AG04450 (cell line): ENCODE measurements at regions of chr1 and their contacts with region 1.

Region 1: GRCh38 chr1:201602413-201603265 is 63.7 kb downstream of the NAV1 start:
- DNase-seq: peak; percentile 78
- H3K4me3 ChIP-seq: no peak overlapping the region
- H3K27ac ChIP-seq: peak overlapping the region; percentile 80
- H3K27me3 ChIP-seq: no peaks in the 10 kb centered on the region
- CTCF ChIP-seq: no peak

Region 2: DNA sequence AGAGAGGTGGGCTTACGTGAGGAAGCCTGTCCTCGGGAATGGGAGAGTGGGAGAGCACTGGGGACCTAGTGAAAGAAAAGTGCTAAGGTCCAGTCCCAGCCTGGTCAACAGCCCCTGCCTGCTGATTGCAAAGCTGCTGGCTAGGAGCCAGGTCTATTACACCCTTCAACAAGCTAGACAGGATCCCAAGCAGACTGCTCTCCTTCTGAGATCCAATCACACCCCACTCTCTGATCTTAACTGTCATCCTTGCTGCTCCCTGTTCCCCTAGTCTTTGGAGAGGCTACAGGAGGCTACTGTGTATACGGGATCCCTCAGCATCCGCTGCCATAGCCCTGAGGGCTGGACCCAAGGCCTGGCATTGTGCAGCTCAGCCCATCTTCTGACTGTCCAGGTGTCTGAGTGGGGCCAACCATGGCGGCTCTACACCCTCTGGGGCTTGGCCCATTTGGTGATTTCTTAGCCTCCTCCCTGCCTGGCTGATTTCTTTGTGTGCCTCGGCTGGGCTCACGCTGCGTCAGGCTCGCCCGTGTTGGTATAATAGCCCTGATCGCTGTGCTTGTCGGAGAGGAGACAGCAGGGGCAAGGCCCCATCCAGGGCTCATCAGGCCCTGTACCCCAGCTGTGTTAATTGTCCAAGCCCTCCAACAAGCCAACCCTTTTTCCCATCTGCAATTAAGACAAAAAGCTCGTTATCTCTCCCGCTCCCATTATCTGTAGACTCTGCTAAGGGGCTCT is 19.8 kb before region 1 on chr1:
- CTCF ChIA-PET with region 1: interaction called, 4 read pairs
- POLR2A ChIA-PET with region 1: interaction called, 30 read pairs
- DNase-seq: no peak
- H3K4me3 ChIP-seq: no peak overlapping the region
- H3K27ac ChIP-seq: peak overlapping the region; percentile 70
- H3K27me3 ChIP-seq: no peaks in the 10 kb centered on the region
- CTCF ChIP-seq: no peak

Region 3: DNA sequence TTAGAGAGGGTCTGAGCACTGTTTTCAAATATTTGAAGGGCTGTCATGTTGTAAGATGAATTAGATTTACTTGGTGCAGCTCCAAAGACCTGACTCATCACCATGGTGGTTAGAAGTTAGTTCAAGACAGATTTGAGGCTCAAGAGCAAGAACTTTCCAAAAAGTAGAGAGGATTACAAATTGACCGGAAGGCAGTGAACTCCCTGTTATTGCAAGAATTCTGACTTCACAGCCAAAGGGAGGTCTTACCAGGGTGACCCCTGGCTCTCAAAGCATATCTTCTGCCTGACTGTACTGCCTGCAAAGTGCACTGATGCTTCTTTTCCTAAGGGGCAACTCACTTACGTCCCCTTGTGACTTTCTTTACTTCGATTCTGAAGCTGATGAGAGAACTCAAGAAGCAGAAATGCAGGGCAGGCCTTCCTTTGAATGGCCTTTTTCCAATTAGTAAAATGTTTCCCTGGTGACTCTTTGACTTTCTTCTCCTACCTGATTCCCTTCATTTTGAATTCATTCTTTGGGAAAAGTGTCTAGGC is 22.7 kb after region 1 on chr1:
- CTCF ChIA-PET with region 1: no interaction called
- POLR2A ChIA-PET with region 1: interaction called, 10 read pairs
- DNase-seq: peak; percentile 92
- H3K4me3 ChIP-seq: no peak overlapping the region
- H3K27ac ChIP-seq: peak overlapping the region; percentile 66
- H3K27me3 ChIP-seq: no peaks in the 10 kb centered on the region
- CTCF ChIP-seq: peak; percentile 42

Region 4: DNA sequence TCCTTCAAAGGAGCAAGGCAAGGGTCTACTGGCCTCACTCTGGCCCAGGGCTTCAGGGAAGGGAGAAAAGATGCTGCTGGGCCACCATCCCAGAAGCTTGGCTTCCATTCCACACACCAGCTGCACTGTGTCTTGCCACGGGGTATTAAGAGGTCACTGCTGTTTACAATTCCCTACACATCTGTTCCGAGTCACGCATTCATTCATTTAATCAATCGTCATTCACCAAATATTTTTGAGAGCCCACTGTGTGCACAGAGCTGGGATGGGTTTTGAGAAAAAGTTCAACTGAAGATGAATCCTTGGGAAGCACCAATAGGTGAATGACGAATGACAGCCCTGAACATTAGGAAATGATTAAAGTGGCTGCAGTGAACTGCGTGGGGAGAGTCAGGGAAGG is 38.0 kb after region 1 on chr1:
- CTCF ChIA-PET with region 1: interaction called, 3 read pairs
- POLR2A ChIA-PET with region 1: interaction called, 14 read pairs
- DNase-seq: peak; percentile 87
- H3K4me3 ChIP-seq: no peak overlapping the region
- H3K27ac ChIP-seq: peak overlapping the region; percentile 85
- H3K27me3 ChIP-seq: no peaks in the 10 kb centered on the region
- CTCF ChIP-seq: no peak